ENCODE measurements at regions of chr3 and their contacts with region 1.

Region 1: GRCh38 chr3:72405943-72406566 is 442.2 kb downstream of the SHQ1 start:
- DNase-seq: no peak
- H3K4me3 Mint-ChIP-seq: no peak overlapping the region
- H3K27ac Mint-ChIP-seq: no peak overlapping the region
- H3K4me1 Mint-ChIP-seq: peaks cover 81% of the 10 kb centered on the region
- H3K27me3 Mint-ChIP-seq: no peaks in the 10 kb centered on the region

Region 2: GRCh38 chr3:72439321-72440183 is 33.5 kb after region 1 on chr3:
- CTCF ChIA-PET with region 1: no interaction called
- POLR2A ChIA-PET with region 1: no interaction called
- intact Hi-C with region 1: loop called (anchors 5 kb)
- DNase-seq: no peak
- H3K4me3 Mint-ChIP-seq: no peak overlapping the region
- H3K27ac Mint-ChIP-seq: no peak overlapping the region
- H3K4me1 Mint-ChIP-seq: peaks cover 88% of the 10 kb centered on the region
- H3K27me3 Mint-ChIP-seq: no peaks in the 10 kb centered on the region